GM10248 (cell line): ENCODE measurements at regions of chr16 and their contacts with region 1.

Region 1: GRCh38 chr16:30018731-30019158 is 4.3 kb upstream of the C16orf92 start:
- DNase-seq: no peak
- CTCF ChIP-seq: no peak

Region 2: GRCh38 chr16:30032083-30032819 is 13.5 kb after region 1 on chr16:
- CTCF ChIA-PET with region 1: interaction called, 18 read pairs
- POLR2A ChIA-PET with region 1: no interaction called
- DNase-seq: peak; percentile 83
- CTCF ChIP-seq: peak; percentile 90